ENCODE measurements at regions of chr1 and their contacts with region 1.

Region 1: GRCh38 chr1:212035123-212035834 is at the starts of genes DTL and INTS7:
- DNase-seq: peak; percentile 94 to 99 (median 99)
- ATAC-seq: peak; percentile 93
- H3K4me3 ChIP-seq: peak within 1 kb of the TSS; percentile 99
- H3K4me3 Mint-ChIP-seq: peak within 1 kb of the TSS; percentile 86 to 100 (median 98)
- H3K27ac ChIP-seq: peak within 1 kb of the TSS; percentile 70
- H3K27ac Mint-ChIP-seq: peak within 1 kb of the TSS; percentile 95 to 99 (median 98)
- H3K4me1 ChIP-seq: peaks cover 20 to 23% of the 10 kb centered on the region in 2 donors
- H3K4me1 Mint-ChIP-seq: peaks cover 18 to 68% (median 54%) of the 10 kb centered on the region in 7 donors
- H3K27me3 ChIP-seq: no peaks in the 10 kb centered on the region
- H3K27me3 Mint-ChIP-seq: peaks cover 0 to 5% (median 0%) of the 10 kb centered on the region in 5 donors
- total RNA-seq, gene DTL: 0.27 to 63.0 (median 0.78) TPM
- total RNA-seq, gene INTS7: 7.3 to 33.5 (median 8.6) TPM

Region 2: DNA sequence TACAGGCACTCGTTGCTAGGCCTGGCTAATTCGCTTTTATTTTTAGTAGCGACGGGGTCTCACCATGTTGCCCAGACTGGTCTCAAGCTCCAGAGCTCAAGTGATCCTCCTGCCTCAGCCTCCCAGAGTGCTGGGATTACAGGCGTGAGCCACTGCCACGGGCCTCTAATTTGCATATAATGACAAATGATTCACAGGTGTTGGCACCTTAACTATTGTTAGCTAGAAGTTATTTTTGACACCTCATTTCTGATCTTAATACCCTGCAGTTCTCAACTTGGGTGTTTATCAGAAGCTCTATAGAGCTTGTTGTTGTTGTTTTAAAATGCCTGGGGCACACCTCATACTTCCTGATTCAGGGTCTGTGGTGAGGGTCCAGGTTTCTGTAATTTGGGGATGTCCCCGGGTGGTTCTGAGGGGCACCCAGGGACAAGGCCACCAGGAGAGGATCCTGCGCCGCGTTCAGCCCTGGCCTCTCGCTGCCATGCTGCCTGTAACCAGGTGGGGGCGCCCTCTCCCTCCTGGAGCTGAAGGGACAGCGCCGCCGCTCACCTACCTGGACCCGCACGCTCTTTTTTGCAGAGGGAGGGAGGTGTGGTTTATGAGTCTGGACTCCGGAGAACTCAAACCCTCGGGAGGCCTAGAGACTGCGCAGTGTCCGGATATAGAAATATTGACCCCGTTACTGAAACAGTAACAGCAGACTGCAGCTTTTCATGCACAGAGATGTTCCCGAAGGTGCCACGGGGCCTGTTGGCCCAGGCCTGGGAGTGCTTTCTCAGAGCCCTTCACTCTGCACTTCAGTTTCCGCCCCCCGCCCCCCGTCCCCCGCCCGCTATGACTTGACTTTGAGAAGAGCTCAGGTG is 336.9 kb before region 1 on chr1:
- CTCF ChIA-PET with region 1: interaction called, 14 read pairs
- POLR2A ChIA-PET with region 1: no interaction called
- intact Hi-C with region 1: loop called in 1 of 2 experiments (anchors 5 kb)
- DNase-seq: peak; percentile 60 to 87 (median 72)
- ATAC-seq: peak; percentile 96
- H3K4me3 ChIP-seq: no peak overlapping the region
- H3K4me3 Mint-ChIP-seq: peak overlapping the region; percentile 23 to 83 (median 65)
- H3K27ac ChIP-seq: no peak overlapping the region
- H3K27ac Mint-ChIP-seq: peak overlapping the region in 2 of 9 donors; percentile 5 to 62
- H3K4me1 ChIP-seq: peaks cover 4 to 16% of the 10 kb centered on the region in 2 donors
- H3K4me1 Mint-ChIP-seq: peaks cover 0 to 42% (median 9%) of the 10 kb centered on the region in 7 donors
- H3K27me3 ChIP-seq: no peaks in the 10 kb centered on the region
- H3K27me3 Mint-ChIP-seq: peaks cover 0 to 37% (median 0%) of the 10 kb centered on the region in 5 donors

Region 3: GRCh38 chr1:212368073-212368484 is 332.8 kb after region 1 on chr1:
- CTCF ChIA-PET with region 1: no interaction called
- POLR2A ChIA-PET with region 1: interaction called, 6 read pairs
- intact Hi-C with region 1: loop called (anchors 1 kb)
- DNase-seq: peak in 7 of 9 donors; percentile 34 to 67 (median 63)
- ATAC-seq: peak; percentile 95
- H3K4me3 ChIP-seq: no peak overlapping the region
- H3K4me3 Mint-ChIP-seq: no peak overlapping the region
- H3K27ac ChIP-seq: no peak overlapping the region
- H3K27ac Mint-ChIP-seq: peak overlapping the region in 4 of 9 donors; percentile 5 to 87 (median 52)
- H3K4me1 ChIP-seq: no peaks in the 10 kb centered on the region
- H3K4me1 Mint-ChIP-seq: peaks cover 0 to 9% (median 0%) of the 10 kb centered on the region in 7 donors
- H3K27me3 ChIP-seq: no peaks in the 10 kb centered on the region
- H3K27me3 Mint-ChIP-seq: no peaks in the 10 kb centered on the region

Region 4: GRCh38 chr1:212455803-212456528 is 420.7 kb after region 1 on chr1:
- CTCF ChIA-PET with region 1: interaction called, 25 read pairs
- POLR2A ChIA-PET with region 1: no interaction called
- intact Hi-C with region 1: loop called in 1 of 2 experiments (anchors 1 kb)
- DNase-seq: peak; percentile 53 to 84 (median 69)
- ATAC-seq: peak; percentile 84
- H3K4me3 ChIP-seq: no peak overlapping the region
- H3K4me3 Mint-ChIP-seq: no peak overlapping the region
- H3K27ac ChIP-seq: no peak overlapping the region
- H3K27ac Mint-ChIP-seq: no peak overlapping the region
- H3K4me1 ChIP-seq: no peaks in the 10 kb centered on the region
- H3K4me1 Mint-ChIP-seq: peaks cover 0 to 12% (median 0%) of the 10 kb centered on the region in 7 donors
- H3K27me3 ChIP-seq: no peaks in the 10 kb centered on the region
- H3K27me3 Mint-ChIP-seq: no peaks in the 10 kb centered on the region

Region 5: DNA sequence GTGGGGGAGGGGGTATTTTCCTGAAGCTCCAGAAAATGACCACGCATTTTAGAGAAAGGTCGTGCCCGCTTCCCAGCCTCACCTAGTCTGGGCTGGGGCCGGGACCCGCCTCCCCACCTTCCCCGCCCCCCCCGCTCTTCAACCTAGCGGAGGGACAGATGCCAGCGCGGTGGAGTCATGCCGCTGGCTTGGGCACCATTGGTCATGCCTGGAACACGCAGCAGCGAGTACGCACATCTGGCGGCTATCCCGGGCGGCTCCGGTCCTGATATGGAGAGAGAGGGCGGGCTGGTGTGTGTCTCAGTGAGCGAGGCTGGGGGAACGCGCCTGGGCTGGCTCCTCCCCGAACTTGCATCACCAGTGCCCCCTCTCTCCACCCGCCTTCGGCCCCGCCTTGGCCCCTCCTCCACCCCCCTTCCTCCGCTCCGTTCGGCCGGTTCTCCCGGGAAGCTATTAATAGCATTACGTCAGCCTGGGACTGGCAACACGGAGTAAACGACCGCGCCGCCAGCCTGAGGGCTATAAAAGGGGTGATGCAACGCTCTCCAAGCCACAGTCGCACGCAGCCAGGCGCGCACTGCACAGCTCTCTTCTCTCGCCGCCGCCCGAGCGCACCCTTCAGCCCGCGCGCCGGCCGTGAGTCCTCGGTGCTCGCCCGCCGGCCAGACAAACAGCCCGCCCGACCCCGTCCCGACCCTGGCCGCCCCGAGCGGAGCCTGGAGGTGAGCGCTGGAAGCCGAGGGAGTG is 573.1 kb after region 1 on chr1 and contains the start of gene ATF3:
- CTCF ChIA-PET with region 1: no interaction called
- POLR2A ChIA-PET with region 1: no interaction called
- intact Hi-C with region 1: loop called (anchors 1 kb)
- DNase-seq: peak; percentile 27 to 90 (median 47)
- ATAC-seq: peak; percentile 87
- H3K4me3 ChIP-seq: peak within 1 kb of the TSS; percentile 70
- H3K4me3 Mint-ChIP-seq: peak within 1 kb of the TSS; percentile 90 to 98 (median 95)
- H3K27ac ChIP-seq: no peak within 1 kb of the TSS
- H3K27ac Mint-ChIP-seq: peak within 1 kb of the TSS; percentile 40 to 98 (median 76)
- H3K4me1 ChIP-seq: peaks cover 17 to 23% of the 10 kb centered on the region in 2 donors
- H3K4me1 Mint-ChIP-seq: peaks cover 17 to 55% (median 21%) of the 10 kb centered on the region in 7 donors
- H3K27me3 ChIP-seq: peaks cover 17 to 26% of the 10 kb centered on the region in 2 donors
- H3K27me3 Mint-ChIP-seq: peaks cover 47 to 66% (median 58%) of the 10 kb centered on the region in 5 donors
- total RNA-seq, gene ATF3: 0.57 to 83.4 (median 12.5) TPM

Region 6: DNA sequence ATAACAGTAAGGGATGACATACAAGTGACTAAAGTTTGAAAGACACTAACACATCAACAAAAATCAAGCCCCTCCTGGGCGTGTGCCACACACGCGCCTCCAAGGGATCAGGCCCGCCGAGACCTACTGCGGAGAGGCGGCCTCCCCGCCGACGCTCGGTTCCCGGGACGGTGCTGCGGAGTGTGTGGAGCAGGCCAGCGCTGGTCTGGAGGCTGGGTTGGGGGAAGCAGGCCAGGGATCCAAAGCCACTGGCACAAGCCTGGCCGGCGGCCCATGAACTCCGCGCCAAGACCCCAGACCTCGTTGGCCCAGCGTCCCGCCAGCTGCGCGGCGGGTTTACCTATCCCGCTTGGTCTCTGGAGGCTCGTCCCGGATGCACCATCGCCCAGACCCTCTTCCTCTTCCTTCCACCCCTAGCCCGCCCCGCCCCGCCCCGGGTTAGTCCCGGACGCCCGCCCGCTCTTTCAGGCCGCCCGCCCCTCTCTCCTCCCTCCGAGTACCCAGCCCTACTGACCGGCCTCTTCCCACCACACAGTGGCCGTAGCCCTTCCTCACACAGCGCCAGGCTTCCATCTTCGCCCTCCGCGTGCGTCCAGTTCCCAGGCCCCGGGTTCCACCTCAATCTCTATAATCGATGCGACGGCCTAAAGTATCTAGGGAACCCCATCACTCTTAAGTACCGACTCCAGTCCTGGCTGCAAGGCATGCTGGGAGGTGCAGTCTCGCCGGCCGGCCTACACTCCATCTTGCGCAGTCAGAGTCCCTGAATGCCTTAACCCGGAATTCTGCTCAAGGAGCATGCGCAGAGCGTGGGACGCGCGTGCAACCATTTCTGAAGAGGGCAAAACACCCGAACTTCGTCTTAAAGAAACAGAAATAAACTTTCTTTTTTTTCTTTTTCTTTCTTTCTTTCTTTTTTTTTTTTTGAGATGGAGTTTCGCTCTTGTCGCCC is 980.1 kb after region 1 on chr1 and contains the start of gene ANGEL2:
- CTCF ChIA-PET with region 1: no interaction called
- POLR2A ChIA-PET with region 1: no interaction called
- intact Hi-C with region 1: loop called (anchors 1 kb)
- DNase-seq: peak; percentile 77 to 97 (median 93)
- ATAC-seq: peak; percentile 99
- H3K4me3 ChIP-seq: peak within 1 kb of the TSS; percentile 87
- H3K4me3 Mint-ChIP-seq: peak within 1 kb of the TSS; percentile 92 to 100 (median 100)
- H3K27ac ChIP-seq: peak within 1 kb of the TSS; percentile 82
- H3K27ac Mint-ChIP-seq: peak within 1 kb of the TSS; percentile 94 to 100 (median 99)
- H3K4me1 ChIP-seq: peaks cover 12 to 19% of the 10 kb centered on the region in 2 donors
- H3K4me1 Mint-ChIP-seq: peaks cover 26 to 47% (median 40%) of the 10 kb centered on the region in 7 donors
- H3K27me3 ChIP-seq: no peaks in the 10 kb centered on the region
- H3K27me3 Mint-ChIP-seq: peaks cover 0 to 7% (median 0%) of the 10 kb centered on the region in 5 donors
- total RNA-seq, gene ANGEL2: 57.8 to 96.5 (median 63.4) TPM

Measured in naive thymus-derived CD4-positive, alpha-beta T cell (primary cell).